ENCODE measurements at regions of chr1 and their contacts with region 1.

Region 1: DNA sequence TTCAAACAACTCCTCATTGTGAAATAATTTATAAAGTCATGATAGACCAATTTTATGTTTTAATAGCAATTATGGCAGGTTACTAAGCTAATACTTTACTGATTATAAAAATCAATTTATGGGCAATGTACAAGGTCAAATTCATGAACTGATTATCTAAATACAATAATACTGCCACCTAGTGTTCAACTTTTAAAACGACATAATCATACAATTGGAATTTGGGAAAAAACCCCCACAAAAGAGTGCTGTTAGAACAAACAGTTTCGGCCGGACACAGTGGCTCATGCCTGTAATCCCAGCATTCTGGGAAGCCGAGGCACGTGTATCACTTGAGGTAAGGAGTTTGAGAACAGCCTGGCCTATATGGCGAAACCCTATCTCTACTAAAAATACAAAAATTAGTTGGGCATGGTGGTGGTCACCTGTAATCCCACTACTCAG is 14.0 kb downstream of the GTF2B start:
- DNase-seq: no peak
- H3K4me3 ChIP-seq: no peak overlapping the region
- H3K27ac ChIP-seq: no peak overlapping the region
- H3K27me3 ChIP-seq: no peaks in the 10 kb centered on the region
- CTCF ChIP-seq: peak; percentile 51

Region 2: GRCh38 chr1:88341447-88341846 is 536.0 kb before region 1 on chr1:
- CTCF ChIA-PET with region 1: no interaction called
- POLR2A ChIA-PET with region 1: no interaction called
- DNase-seq: no peak
- H3K4me3 ChIP-seq: no peak overlapping the region
- H3K27ac ChIP-seq: no peak overlapping the region
- H3K27me3 ChIP-seq: no peaks in the 10 kb centered on the region
- CTCF ChIP-seq: no peak

Region 3: DNA sequence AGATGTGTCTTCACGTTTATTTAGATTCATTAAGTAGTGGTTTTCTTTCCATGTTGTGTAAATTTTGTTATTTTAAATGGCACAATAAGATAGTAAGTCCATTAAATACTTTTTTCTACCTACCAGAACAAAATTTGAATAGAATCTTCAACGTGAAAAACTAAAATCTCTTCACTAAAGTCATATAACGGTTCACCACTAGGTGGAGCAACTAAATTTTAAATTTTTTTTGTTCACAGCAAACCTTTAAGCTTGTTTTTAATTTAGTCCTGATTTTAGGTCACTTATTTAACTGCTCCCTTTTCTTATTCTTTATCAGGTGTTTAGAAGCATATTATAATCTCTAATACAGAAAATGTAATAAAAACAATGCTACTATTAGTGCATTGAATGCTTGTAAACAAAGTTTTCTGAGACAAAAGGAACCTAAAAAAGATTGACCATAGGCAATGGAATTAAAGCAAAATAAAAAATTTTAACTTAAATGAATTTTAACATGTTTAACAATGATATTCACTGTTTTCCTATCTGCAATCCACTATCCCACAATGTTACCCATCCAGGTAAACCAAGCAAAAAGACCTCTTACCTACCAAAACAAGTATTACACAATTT is 221.6 kb before region 1 on chr1:
- CTCF ChIA-PET with region 1: interaction called, 131 read pairs
- POLR2A ChIA-PET with region 1: no interaction called
- DNase-seq: no peak
- H3K4me3 ChIP-seq: no peak overlapping the region
- H3K27ac ChIP-seq: no peak overlapping the region
- H3K27me3 ChIP-seq: peaks cover 3% of the 10 kb centered on the region
- CTCF ChIP-seq: peak; percentile 58

Region 4: DNA sequence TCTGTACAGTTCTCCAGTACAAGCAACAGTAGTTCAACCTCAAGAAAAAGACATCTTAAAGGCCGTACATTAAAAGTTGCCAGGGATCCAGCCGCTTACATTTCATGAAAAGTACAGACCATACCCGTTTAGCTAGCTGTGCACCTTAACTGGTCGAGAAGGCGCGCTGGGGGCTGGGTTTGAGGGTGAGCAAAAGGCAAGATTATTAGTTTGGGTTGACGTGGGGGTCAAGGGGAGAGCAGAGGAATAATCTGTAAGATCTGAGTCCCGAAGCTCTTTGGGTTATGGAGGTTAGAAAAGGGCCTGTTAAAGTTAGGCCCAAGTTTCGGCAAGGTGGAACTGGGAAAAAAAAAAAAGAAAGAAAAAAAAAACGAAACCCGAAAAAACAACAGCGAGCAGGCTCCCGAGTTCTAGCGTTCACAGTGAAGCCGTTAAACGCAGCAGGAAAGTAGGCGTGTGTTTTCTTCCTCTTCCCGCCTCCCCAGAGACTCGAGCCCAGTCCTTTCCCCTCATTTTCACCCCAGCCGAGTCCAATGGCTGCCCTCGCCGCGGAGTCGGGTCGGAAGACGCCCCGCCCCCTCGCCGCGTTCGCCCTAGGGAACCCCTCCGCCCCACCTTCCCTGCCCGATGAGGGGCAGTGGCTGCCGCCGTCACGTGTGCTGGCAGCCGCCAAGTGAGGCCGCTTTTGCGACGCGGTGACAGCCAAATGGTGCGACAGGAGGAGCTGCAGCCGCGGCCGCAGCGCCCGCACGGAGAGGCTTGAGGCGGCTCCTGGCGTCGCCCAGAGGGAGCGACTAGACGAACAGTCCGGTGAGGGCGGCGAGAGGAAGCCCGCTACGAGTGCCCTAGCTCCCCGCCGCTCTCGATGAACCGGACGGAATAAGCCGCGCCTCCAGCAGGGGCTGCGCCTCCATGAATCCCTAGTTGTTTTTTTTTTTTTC is 193.6 kb before region 1 on chr1 and contains the start of gene PKN2:
- CTCF ChIA-PET with region 1: interaction called, 12 read pairs
- POLR2A ChIA-PET with region 1: no interaction called
- DNase-seq: peak; percentile 97
- H3K4me3 ChIP-seq: peak within 1 kb of the TSS; percentile 74
- H3K27ac ChIP-seq: peak within 1 kb of the TSS; percentile 90
- H3K27me3 ChIP-seq: no peaks in the 10 kb centered on the region
- CTCF ChIP-seq: peak; percentile 13; the same call in 1 of the 2 replicates
- polyA plus RNA-seq, gene PKN2: 23.1 and 35.9 TPM in 2 replicates

Region 5: DNA sequence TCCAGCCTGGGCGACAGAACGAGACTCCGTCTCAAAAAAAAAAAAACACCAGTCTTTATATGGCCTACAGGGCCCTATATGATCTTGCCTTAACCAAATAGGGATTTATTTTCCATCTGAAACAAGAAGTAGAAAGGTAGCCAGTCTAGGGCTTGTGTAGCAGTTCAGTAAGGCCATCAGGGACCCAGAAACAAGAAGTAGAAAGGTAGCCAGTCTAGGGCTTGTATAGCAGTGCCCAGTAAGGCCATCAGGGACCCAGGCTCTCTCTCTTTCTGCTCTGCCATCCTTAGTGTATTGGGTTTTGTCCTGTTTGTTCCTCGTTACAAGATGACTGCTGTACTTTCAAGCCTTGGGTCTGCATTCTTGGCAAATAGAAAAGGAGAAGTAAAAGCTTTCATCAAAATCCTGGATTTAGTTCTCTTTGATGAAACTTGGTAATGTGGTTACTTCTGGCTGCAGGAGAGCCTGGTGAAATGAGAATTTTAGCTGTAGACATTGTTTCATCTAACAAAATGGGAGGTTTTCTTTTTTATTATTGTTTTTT is 147.2 kb before region 1 on chr1:
- CTCF ChIA-PET with region 1: interaction called, 38 read pairs
- POLR2A ChIA-PET with region 1: no interaction called
- DNase-seq: no peak
- H3K4me3 ChIP-seq: no peak overlapping the region
- H3K27ac ChIP-seq: no peak overlapping the region
- H3K27me3 ChIP-seq: no peaks in the 10 kb centered on the region
- CTCF ChIP-seq: no peak

Region 6: DNA sequence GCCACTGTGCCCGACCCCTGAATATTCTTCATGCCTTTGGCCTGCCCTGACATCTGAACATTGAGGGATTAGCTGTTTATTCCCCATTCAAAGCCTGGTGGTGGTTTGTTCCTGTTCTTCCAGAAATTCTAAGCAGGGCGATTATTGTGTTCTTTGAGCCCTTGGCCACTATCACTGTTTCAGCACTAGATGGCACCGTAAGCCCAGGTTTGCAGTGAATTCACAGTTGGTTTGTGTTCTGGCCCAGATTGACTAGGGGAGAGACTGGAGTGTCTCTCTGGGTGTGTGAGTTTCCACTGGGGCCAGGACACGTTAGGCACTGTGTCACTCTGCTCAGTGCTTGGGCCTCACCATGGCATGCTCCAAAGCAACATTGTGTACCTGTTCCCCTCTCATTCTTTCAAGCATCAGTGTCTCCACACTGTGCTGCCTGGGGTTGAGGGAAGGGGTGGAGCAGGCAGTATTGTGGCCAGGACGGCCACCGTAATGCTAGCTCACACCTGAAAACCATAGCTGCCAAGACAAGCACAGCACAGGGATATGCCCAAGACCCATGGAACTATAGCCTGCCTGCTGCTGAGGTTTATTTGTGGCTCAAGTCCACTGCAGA is 140.7 kb before region 1 on chr1:
- CTCF ChIA-PET with region 1: interaction called, 38 read pairs
- POLR2A ChIA-PET with region 1: no interaction called
- DNase-seq: no peak
- H3K4me3 ChIP-seq: no peak overlapping the region
- H3K27ac ChIP-seq: no peak overlapping the region
- H3K27me3 ChIP-seq: no peaks in the 10 kb centered on the region
- CTCF ChIP-seq: peak; percentile 68

Region 7: DNA sequence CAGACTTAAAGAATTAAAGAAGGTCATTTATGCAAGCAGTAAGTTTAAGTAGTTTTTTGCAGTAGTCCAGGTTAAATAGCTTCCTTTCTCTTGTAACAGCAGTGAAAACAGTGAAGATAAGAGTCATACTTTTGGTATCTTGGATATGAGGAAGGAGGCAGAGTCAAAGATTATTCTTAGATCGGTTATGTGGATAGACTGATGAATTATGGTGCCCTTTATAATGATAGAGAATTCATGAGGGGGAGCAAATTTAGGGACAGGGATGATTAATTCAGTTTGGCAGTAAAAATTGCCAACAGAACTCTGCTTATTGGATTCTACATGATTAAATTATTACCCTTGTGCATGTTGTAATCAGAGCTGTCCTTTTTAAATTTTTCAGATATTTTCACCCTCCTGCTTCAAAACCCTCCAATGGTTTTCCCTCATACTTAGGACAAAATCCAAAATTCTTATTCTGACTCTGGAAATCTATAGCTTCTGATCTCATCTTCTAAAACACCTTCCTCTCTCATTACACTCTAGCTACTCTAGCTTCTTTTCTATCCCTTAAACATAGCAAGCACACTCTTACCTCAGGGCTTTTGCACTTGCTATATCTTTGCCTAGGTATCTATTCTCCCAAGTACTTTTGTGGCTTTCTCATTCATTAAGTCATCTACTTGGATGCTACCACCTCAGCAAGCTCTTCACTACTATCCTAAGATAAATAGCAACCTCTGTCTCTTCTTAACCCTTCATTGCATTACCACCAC is 113.6 kb before region 1 on chr1:
- CTCF ChIA-PET with region 1: interaction called, 13 read pairs
- POLR2A ChIA-PET with region 1: no interaction called
- DNase-seq: no peak
- H3K4me3 ChIP-seq: no peak overlapping the region
- H3K27ac ChIP-seq: no peak overlapping the region
- H3K27me3 ChIP-seq: no peaks in the 10 kb centered on the region
- CTCF ChIP-seq: no peak

Region 8: DNA sequence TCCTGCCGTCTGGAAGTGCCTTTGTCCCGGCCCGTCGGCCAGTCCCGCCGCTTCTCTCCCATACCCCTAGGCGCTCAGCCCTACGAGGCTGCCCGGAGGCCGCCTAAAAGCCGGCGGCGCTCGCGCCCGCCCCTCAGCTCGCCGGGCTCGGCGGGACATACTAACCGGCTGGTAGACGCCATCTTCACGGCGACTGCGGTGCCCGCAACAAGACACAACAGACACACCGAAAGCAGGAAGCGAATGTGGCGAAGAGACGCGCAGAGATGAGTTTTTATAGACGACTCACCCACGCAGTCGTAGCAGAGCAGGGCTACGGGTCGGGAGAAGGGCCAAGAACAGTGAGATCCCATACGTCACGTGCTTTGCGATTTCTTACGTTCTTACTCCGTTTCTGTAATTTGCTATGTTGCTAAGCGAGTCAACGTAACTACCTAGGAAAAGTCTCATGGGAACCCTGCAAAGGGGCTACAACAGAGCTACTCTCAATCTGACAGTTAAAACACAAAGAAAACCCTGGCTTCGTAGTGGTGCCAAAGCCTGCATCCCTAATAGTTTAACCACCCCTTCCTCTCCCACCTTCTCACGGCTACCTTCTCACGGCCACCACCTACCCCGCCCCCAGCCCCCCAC is 14.0 kb after region 1 on chr1 and contains the start of gene GTF2B:
- CTCF ChIA-PET with region 1: interaction called, 41 read pairs
- POLR2A ChIA-PET with region 1: interaction called, 4 read pairs
- DNase-seq: peak; percentile 95
- H3K4me3 ChIP-seq: peak within 1 kb of the TSS; percentile 97
- H3K27ac ChIP-seq: peak within 1 kb of the TSS; percentile 74
- H3K27me3 ChIP-seq: peaks cover 2% of the 10 kb centered on the region
- CTCF ChIP-seq: no peak
- polyA plus RNA-seq, gene GTF2B: 37.1 and 51.7 TPM in 2 replicates

Region 9: DNA sequence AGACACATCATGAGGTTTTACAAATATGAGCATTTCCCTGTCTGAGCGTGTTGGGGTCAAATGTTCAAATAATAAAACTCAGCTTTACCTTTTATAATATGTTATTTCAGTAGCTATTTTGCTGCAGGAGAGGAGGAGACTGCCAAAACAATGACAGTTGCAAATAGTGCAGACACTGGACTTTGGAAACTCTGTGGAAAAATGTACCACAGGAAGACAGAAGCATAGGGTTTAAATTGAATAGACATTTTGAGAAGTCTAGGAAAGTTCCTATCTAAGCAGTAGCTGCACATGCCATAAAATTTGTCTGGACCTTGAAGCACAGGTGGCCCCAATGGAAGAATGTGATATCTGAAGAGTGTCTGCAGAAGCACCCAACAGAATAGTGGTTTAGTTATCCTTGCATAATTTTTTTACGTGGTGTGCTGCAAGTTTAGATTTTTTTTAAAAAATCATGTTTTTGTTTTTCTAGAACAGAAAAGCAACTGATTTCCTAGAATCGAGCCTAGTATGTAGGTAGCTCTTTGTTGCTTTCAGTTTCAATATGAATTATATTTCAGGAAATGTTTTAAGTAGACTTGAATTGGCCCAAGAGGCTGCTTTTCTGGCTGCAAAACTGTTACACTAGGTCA is 409.3 kb after region 1 on chr1:
- CTCF ChIA-PET with region 1: no interaction called
- POLR2A ChIA-PET with region 1: no interaction called
- DNase-seq: no peak
- H3K4me3 ChIP-seq: no peak overlapping the region
- H3K27ac ChIP-seq: no peak overlapping the region
- H3K27me3 ChIP-seq: no peaks in the 10 kb centered on the region
- CTCF ChIP-seq: no peak

Measured in AG04450 (cell line).